Dendritic cell treated with granulocyte-macrophage colony-stimulating factor and Interleukin-4, amounts not matched to agents 40 ng/mL and 50 ng/mL, for 4 days (primary cell): ENCODE measurements at regions of chr5 and their contacts with region 1.

Region 1: DNA sequence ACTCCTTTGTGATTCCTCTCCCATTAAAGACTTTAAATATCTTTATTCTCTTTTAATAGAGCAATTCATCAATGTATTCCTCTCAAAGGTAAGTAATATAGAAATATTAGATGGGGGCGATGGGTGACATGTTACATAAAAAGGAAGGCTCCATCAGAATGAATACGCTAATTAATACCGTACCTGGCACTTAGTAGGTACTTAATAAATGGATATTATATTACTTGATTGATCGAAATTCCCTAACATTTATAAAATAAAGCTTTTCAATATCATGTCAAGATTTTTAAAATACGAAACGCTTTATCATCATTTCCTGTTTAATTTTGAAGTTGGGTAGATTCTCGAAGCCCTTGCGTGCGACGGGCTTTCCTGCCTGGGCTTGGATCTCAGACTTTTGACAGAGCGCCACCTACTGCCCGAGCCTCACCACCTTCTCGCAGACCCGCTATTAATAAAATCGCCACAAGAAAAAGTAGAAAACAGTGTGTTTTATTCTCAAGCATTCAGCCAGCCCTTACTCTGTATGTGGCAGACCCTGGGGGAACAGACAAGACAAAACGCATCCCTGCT is 99.4 kb downstream of the C5orf15 start:
- H3K4me3 Mint-ChIP-seq: no peak overlapping the region
- H3K27ac Mint-ChIP-seq: no peak overlapping the region
- H3K4me1 Mint-ChIP-seq: peaks cover 2% of the 10 kb centered on the region
- H3K27me3 Mint-ChIP-seq: peaks cover 14% of the 10 kb centered on the region

Region 2: GRCh38 chr5:133423618-133424282 is 445.3 kb before region 1 on chr5:
- intact Hi-C with region 1: loop called (anchors 5 kb)
- H3K4me3 Mint-ChIP-seq: no peak overlapping the region
- H3K27ac Mint-ChIP-seq: no peak overlapping the region
- H3K4me1 Mint-ChIP-seq: peaks cover 7% of the 10 kb centered on the region
- H3K27me3 Mint-ChIP-seq: peaks cover 24% of the 10 kb centered on the region

Region 3: DNA sequence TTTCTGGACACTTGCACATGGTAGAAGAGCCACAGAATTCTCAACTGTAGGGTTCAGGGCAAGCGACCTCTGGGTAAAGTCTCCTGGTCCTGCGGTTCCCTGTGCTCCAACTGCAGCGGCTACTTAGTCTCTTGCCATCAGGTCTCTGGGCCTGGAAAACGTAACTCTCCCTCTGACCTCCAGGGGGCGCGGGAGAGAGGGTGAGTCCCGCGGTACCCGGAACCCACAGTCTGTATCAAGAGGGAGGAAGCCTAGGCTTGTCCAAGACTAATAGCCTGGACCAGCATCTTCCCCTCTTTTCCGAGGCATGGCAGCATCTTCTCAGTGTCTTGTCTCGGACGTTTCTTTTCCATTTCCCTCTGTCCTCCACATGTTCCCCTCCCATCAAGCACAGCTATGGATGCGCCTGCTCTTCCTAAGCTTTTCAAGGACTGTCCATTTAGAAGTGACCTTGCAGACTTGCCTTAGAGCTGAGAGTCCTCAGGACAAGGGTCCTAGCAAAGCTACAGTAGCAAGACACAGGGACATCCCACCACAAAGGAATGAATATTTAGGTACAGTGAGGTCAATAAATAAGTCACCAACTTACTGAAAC is 316.0 kb before region 1 on chr5:
- intact Hi-C with region 1: loop called (anchors 2 kb)
- H3K4me3 Mint-ChIP-seq: no peak overlapping the region
- H3K27ac Mint-ChIP-seq: no peak overlapping the region
- H3K4me1 Mint-ChIP-seq: no peaks in the 10 kb centered on the region
- H3K27me3 Mint-ChIP-seq: peaks cover 25% of the 10 kb centered on the region

Region 4: DNA sequence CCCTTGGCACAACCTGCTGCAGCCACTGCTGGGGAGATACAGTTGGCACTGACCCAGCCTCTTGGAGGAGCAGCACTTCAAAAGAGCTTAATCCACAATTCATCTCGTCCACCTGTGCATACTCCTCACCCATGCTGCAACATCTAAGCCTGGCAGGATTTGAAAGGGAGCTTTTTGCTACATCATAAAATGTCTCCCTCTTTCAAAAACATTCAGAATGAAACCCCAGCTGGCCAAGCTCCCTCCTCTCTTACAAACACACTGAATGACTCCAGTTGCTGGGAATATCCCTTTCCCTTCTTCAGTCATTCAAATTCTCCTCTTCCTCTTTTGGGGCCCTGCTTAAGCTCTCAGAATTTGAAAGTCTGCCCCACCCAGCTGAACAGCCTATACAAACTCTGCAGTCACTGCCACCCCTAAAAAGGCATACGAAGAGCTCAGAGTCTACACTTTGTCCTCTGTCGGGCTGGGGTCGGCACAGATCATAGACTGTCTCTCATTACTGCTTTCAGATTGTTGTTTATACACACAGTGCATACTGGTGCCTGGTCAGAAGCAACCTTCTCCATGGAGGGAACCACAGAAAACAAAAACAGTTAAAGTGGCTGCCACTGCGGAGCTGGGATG is 108.2 kb after region 1 on chr5:
- intact Hi-C with region 1: no loop called
- H3K4me3 Mint-ChIP-seq: peak overlapping the region; percentile 6
- H3K27ac Mint-ChIP-seq: peak overlapping the region; percentile 82
- H3K4me1 Mint-ChIP-seq: peaks cover 23% of the 10 kb centered on the region
- H3K27me3 Mint-ChIP-seq: no peaks in the 10 kb centered on the region